Esophagus muscularis mucosa (tissue), 4 donors: ENCODE measurements at regions of chr20 and their contacts with region 1.

Region 1: GRCh38 chr20:16761305-16761829 is 13.2 kb downstream of the OTOR start:
- DNase-seq: no peak
- H3K4me3 ChIP-seq: no peak overlapping the region
- H3K27ac ChIP-seq: no peak overlapping the region
- H3K4me1 ChIP-seq: peaks cover 0 to 6% (median 2%) of the 10 kb centered on the region in 4 donors
- H3K27me3 ChIP-seq: peaks cover 0 to 7% (median 0%) of the 10 kb centered on the region in 4 donors
- CTCF ChIP-seq: peak; percentile 49 to 67 (median 53)
- EP300 ChIP-seq: no peak
- POLR2A ChIP-seq: no peak

Region 2: DNA sequence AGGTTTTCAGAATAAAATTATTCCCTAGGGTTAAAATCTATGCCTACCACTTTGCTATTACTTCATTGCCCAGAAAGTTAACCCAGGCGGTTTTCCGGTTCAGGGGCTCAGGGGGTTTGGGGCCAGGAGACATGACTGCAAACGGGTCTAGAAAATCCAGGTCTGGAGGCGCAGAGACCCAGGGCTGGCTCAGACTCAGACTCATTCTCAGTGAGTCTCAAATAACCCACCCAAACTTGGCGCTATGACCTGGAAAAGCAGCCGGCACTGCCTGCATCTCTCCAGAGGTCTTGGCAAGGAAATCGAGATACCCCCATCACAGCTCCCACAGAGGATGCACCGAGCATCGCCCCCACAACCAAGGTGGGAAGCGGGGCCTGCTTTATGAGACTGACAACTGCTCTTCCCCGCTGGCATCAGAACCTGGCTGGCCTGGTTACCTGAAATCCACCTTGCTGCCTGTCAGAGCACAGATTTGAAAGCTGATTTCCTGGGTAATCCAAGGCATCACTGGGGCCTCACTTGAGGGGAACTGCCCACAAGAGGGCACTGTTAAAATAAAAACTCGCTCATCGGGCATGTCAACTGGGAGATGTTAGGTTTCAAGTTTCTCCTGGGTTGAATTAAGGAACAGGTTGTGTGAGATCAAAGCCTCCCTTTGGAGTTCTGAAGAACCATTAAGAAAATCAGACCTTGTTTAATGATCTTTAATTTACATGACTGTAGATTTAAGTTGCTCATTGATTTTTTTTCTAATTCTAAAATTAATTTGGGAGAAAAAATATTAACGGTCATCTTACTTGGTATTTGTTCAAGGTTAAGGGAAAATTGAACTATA is 243.2 kb before region 1 on chr20:
- intact Hi-C with region 1: loop called (anchors 5 kb)
- DNase-seq: no peak
- H3K4me3 ChIP-seq: no peak overlapping the region
- H3K27ac ChIP-seq: no peak overlapping the region
- H3K4me1 ChIP-seq: no peaks in the 10 kb centered on the region
- H3K27me3 ChIP-seq: no peaks in the 10 kb centered on the region
- CTCF ChIP-seq: peak; percentile 32 to 53 (median 41)
- EP300 ChIP-seq: no peak
- POLR2A ChIP-seq: no peak